Cardiac septum (tissue), 1 donor: ENCODE measurements at regions of chr5 and their contacts with region 1.

Region 1: DNA sequence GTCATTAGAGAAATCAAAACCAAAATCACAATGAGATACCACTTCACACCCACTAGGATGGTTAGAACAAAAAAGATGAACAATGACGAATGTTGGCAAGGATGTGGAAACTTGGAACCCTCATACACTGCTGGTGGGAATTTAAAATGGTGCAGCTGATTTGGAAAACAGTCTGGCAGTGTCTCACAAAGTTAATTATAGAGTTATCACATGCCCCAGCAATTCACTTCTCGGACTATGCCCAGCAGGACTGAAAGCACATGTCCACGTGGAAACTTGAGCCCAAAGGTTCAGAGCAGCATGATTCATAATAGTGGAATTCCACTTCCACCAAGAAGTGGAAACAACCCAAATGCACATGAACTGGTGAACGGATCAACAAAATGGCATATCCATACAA is 85.0 kb upstream of the HRH2 start:
- DNase-seq: no peak

Region 2: DNA sequence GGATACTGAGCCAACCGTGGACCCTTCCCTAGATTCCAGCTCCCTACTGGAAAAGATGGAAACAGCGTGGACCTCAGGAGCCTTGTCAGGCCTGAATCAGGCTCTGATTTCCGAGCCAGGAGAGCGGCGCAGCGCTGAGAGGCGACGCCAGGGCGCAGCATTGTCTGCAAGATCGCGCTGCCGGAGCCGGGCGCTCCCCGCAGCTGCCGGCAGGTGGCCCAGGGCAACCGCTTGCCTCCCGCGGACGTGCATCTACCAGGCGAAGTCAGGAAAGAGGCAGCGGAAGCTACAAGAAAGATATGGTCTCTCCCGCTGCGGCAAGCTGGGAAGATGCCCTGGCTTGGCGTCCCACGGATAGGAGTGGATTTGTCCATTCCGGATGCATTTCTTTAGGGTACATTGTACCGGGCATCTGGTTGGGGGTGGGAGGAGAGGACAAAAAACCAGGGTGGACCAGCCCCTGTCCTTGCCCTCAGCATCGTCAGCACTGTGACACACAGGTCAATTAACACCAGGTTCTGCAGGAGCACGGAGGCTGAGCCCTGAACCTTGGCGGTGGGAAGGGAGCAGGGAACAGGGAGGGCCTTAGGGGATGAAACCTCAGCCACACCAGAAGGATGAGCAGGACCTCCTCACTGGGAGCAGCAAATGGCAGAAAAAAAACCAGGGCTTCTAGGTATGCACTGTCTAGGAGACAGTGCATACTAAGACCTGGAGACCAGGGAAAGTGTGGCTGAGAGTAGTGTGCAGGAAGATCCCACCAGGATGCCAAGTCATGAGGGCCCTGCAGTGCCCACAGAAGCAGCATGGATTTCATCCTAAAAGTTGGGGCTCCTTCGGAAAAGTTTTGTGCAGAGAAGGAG is 38.6 kb before region 1 on chr5:
- intact Hi-C with region 1: loop called (anchors 5 kb)
- DNase-seq: peak; percentile 95

Region 3: GRCh38 chr5:175597718-175598117 is 24.8 kb after region 1 on chr5:
- intact Hi-C with region 1: loop called (anchors 2 kb)
- DNase-seq: no peak

Region 4: GRCh38 chr5:175657593-175658271 is 84.8 kb after region 1 on chr5 and contains the start of gene HRH2:
- intact Hi-C with region 1: loop called (anchors 2 kb)
- DNase-seq: peak; percentile 89
- total RNA-seq, gene HRH2: 60.1 TPM

Region 5: GRCh38 chr5:175687231-175687701 is 114.4 kb after region 1 on chr5:
- intact Hi-C with region 1: loop called (anchors 1 kb)
- DNase-seq: peak; percentile 92

Region 6: GRCh38 chr5:175718401-175719108 is 145.7 kb after region 1 on chr5:
- intact Hi-C with region 1: loop called (anchors 10 kb)
- DNase-seq: peak; percentile 74

Region 7: GRCh38 chr5:175746851-175747250 is 174.0 kb after region 1 on chr5:
- intact Hi-C with region 1: no loop called
- DNase-seq: no peak